GM12878 (cell line): ENCODE measurements at regions of chr12 and their contacts with region 1.

Region 1: DNA sequence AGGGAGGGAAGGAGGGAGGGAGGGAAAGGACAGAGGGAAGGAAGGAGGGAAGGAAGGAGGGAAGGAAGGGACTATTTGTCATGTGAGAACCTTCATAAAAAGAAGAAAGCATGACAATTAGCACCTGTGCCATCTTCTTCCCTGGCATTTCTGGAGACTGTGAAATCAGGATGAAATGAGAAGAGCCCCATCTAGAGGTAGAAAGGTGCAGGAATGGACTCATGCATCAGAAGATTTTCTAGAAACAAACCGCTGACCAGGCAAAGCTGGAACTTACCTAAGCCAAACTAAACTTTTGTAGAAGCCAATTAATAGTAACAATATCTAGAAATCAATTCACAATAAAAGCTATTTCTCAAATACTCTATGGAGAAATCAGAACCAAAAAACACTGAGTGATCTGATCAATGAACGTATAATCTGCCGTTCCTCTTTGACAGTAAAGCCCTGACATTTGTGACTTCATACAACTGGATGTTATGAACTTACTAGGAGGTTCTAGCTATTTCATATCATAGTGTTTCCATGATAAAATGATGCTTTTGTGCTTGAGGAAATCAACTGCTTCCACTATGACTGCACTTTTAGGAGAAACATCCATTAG is 24.4 kb upstream of the CRACR2A start:
- DNase-seq: no peak
- ATAC-seq: peak; percentile 69; the same call in 2 of the 3 replicates
- H3K4me3 ChIP-seq: no peak overlapping the region
- H3K27ac ChIP-seq: no peak overlapping the region
- H3K4me1 ChIP-seq: no peaks in the 10 kb centered on the region
- H3K27me3 ChIP-seq: no peaks in the 10 kb centered on the region
- CTCF ChIP-seq: peak; percentile 56 to 72 (median 65); a peak in 5 of 6 replicates
- EP300 ChIP-seq: no peak
- POLR2A ChIP-seq: no peak
- RAD21 ChIP-seq: peak; percentile 79

Region 2: DNA sequence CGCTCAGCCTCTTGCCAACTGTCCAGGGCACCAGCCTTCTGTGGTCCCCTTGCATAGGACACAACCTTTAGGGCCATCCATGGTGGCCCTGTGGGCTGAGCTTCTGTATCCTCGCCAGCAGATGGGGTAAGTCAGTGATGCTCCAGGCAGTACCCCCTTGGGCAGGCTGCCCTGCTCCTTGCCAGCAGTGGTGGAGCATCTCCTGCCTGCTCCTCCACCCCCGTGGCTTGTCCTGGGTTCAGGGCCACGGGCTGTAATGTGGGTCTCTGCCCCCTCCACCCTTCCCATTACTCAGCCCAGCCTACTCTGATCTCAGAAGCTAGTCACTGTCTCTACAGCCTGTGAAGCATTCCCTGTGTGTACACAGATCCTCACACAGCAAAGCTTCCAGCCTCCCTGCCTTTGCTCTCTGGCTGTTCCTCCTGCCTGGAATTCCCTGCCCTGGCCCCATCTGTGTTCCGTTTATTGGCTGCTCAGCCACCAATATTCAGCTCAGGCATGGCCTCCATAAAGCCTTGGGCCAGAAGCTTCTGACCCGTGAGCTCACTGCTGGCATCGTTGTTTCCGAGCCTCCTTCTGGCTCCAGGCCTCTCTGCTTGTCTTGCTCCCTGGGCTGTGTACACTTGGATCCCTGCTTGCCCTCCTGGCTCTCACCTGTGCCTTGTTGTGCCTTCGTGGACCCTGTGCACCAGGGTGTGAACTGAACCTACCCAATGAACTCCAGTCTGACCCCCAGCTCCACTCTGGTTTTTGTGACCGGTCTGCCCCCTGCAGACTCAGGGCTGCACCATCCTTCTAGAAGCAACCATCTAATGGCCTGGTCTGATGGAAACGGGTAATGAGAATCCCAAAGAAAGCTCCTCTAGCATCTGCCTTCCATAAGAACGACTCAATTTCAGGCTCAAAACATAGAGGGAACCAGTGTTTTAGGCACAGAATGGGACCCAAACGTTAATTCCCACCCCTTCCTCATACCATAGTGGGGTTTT is 463.3 kb before region 1 on chr12:
- CTCF ChIA-PET with region 1: interaction called, 12 read pairs
- POLR2A ChIA-PET with region 1: no interaction called
- RAD21 ChIA-PET with region 1: no interaction called
- SMC1A ChIA-PET with region 1: no interaction called
- in situ Hi-C with region 1: no loop called
- intact Hi-C with region 1: no loop called
- DNase-seq: no peak
- ATAC-seq: peak; percentile 91
- H3K4me3 ChIP-seq: no peak overlapping the region
- H3K27ac ChIP-seq: no peak overlapping the region
- H3K4me1 ChIP-seq: no peaks in the 10 kb centered on the region
- H3K27me3 ChIP-seq: no peaks in the 10 kb centered on the region; a peak in 2 of 4 replicates
- CTCF ChIP-seq: peak; percentile 40 to 44 (median 41); a peak in 5 of 6 replicates
- EP300 ChIP-seq: no peak
- POLR2A ChIP-seq: no peak
- RAD21 ChIP-seq: peak; percentile 34

Region 3: DNA sequence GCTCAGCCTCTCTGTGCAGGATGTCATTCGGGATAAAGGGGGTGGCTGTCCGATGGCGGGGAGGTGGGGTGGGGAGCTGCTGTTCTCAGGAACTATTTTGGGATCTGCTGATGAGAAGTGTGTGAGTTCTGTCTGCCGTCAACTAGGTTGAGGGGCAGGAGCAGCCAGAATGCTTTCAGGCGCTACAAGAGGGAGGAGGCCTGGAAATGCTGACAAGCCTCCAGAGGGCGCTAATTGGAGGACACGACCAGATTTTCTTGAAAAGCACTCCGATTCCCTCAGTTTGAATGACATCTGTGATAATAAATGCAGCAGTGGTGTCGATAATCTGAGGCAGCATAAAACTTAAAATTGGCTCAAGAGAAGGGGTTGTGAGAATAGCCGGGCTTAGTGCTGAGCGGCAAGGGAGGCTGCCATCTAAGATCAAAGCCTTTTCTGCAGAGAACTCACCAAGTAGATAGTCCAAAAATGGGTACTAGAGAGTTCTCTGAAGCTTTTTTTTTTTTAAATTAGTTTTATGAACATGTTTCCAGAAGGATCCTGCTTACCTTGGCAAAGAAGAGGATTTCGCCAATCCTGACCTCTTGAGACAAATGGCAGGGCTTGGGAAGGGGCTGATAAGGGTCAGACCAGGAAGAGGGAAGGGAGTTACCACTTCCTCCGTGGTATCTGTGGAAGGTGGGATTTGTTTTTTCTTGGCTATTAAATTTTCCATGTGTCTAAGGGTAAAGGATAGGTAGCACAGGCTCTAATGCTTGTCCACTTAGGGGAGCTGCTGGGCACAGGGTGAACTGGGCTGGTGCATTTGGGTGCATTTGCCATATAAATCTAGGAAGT is 118.8 kb before region 1 on chr12:
- CTCF ChIA-PET with region 1: interaction called, 5 read pairs
- POLR2A ChIA-PET with region 1: no interaction called
- RAD21 ChIA-PET with region 1: interaction called, 3 read pairs
- SMC1A ChIA-PET with region 1: no interaction called
- in situ Hi-C with region 1: no loop called
- intact Hi-C with region 1: loop called (anchors 5 kb)
- DNase-seq: no peak
- ATAC-seq: no peak
- H3K4me3 ChIP-seq: no peak overlapping the region
- H3K27ac ChIP-seq: no peak overlapping the region
- H3K4me1 ChIP-seq: no peaks in the 10 kb centered on the region
- H3K27me3 ChIP-seq: no peaks in the 10 kb centered on the region
- CTCF ChIP-seq: peak; percentile 29 to 32 (median 31); a peak in 4 of 6 replicates
- EP300 ChIP-seq: no peak
- POLR2A ChIP-seq: no peak
- RAD21 ChIP-seq: 0 out of 2 replicates have a peak, but pooled peaks have one; percentile 24

Region 4: GRCh38 chr12:3735432-3735831 is 41.9 kb before region 1 on chr12:
- CTCF ChIA-PET with region 1: no interaction called
- POLR2A ChIA-PET with region 1: no interaction called
- RAD21 ChIA-PET with region 1: no interaction called
- SMC1A ChIA-PET with region 1: no interaction called
- in situ Hi-C with region 1: no loop called
- intact Hi-C with region 1: no loop called
- DNase-seq: no peak
- ATAC-seq: no peak
- H3K4me3 ChIP-seq: no peak overlapping the region
- H3K27ac ChIP-seq: no peak overlapping the region
- H3K4me1 ChIP-seq: no peaks in the 10 kb centered on the region
- H3K27me3 ChIP-seq: no peaks in the 10 kb centered on the region
- CTCF ChIP-seq: no peak
- EP300 ChIP-seq: no peak
- POLR2A ChIP-seq: no peak
- RAD21 ChIP-seq: no peak